ENCODE measurements at regions of chr10 and their contacts with region 1.

Region 1: GRCh38 chr10:62050893-62051433 is 149.5 kb downstream of the ARID5B start:
- DNase-seq: peak; percentile 72
- H3K4me3 Mint-ChIP-seq: peak overlapping the region; percentile 97
- H3K27ac Mint-ChIP-seq: peak overlapping the region; percentile 99
- H3K4me1 Mint-ChIP-seq: peaks cover 86% of the 10 kb centered on the region
- H3K27me3 Mint-ChIP-seq: no peaks in the 10 kb centered on the region

Region 2: DNA sequence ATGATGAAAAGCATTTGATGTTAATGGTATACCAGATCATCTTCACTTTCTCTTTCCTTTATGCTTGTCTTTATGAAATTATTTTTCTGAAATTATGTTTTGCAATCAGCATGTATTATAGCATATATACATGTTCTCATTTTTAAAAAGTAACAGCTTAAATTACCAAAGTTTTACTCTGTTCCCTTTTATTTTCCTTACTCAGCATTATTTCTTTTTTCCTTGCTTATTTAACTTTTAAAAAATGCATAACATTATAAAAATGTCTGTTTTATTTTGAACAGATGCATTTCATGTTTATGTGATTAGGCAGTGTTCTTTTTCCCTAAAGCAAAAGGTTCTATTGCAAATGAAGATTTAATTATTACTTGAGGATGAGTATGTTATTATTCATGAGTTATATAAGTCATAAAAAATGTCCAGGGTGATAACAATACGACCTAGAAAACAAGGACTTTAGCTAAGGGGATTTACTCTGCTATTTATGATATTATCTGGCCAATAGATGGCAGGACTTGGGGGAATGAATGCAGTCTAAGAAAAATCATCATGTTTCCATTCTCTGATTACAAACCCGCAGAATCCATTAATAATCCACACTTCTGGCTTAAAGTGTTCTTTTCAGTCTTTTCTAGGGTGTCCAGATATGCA is 349.8 kb before region 1 on chr10:
- intact Hi-C with region 1: no loop called
- DNase-seq: no peak
- H3K4me3 Mint-ChIP-seq: no peak overlapping the region
- H3K27ac Mint-ChIP-seq: no peak overlapping the region
- H3K4me1 Mint-ChIP-seq: no peaks in the 10 kb centered on the region
- H3K27me3 Mint-ChIP-seq: peaks cover 9% of the 10 kb centered on the region

Region 3: GRCh38 chr10:61760943-61761824 is 289.8 kb before region 1 on chr10:
- intact Hi-C with region 1: loop called (anchors 5 kb)
- DNase-seq: no peak
- H3K4me3 Mint-ChIP-seq: peak overlapping the region; percentile 30
- H3K27ac Mint-ChIP-seq: peak overlapping the region; percentile 87
- H3K4me1 Mint-ChIP-seq: peaks cover 65% of the 10 kb centered on the region
- H3K27me3 Mint-ChIP-seq: no peaks in the 10 kb centered on the region

Region 4: GRCh38 chr10:61943674-61944410 is 107.1 kb before region 1 on chr10:
- intact Hi-C with region 1: loop called (anchors 1 kb)
- DNase-seq: no peak
- H3K4me3 Mint-ChIP-seq: peak overlapping the region; percentile 47
- H3K27ac Mint-ChIP-seq: peak overlapping the region; percentile 93
- H3K4me1 Mint-ChIP-seq: peaks cover 47% of the 10 kb centered on the region
- H3K27me3 Mint-ChIP-seq: no peaks in the 10 kb centered on the region

Region 5: DNA sequence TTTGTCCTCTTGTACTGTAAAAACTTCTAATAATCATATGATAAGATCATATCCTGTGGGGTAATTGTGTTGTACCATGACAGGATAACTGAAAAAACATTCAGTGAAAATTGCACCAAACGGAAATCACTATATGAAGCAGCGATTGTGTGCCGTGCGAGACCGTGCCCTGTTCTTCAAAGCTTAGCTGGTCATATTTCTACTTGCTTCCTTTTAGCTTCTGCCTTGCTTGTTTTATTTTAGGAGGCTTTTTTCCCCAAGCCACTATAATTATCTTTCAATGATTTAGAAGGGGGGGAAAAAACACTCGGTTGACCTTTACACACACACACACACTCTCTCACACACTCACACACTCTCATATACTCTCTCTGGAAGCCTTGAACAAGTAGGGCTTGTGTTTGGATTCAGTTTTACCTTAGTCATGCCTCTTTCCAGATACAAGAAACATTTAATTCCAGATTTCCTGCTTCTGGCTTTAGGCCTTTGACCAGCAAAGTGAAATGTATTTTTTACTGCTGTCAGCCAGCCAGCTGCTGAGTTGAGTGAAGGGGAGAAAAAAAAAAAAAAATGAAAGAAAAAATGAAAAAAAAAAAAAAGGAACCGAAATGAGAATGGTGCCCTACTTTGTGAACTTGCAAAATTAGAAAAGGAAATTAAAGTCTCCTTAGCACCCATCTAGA is 31.9 kb after region 1 on chr10:
- intact Hi-C with region 1: loop called (anchors 2 kb)
- DNase-seq: peak; percentile 44
- H3K4me3 Mint-ChIP-seq: peak overlapping the region; percentile 61
- H3K27ac Mint-ChIP-seq: peak overlapping the region; percentile 87
- H3K4me1 Mint-ChIP-seq: peaks cover 62% of the 10 kb centered on the region
- H3K27me3 Mint-ChIP-seq: no peaks in the 10 kb centered on the region

Region 6: GRCh38 chr10:62113680-62114079 is 62.7 kb after region 1 on chr10:
- intact Hi-C with region 1: no loop called
- DNase-seq: no peak
- H3K4me3 Mint-ChIP-seq: no peak overlapping the region
- H3K27ac Mint-ChIP-seq: no peak overlapping the region
- H3K4me1 Mint-ChIP-seq: peaks cover 32% of the 10 kb centered on the region
- H3K27me3 Mint-ChIP-seq: no peaks in the 10 kb centered on the region

Region 7: DNA sequence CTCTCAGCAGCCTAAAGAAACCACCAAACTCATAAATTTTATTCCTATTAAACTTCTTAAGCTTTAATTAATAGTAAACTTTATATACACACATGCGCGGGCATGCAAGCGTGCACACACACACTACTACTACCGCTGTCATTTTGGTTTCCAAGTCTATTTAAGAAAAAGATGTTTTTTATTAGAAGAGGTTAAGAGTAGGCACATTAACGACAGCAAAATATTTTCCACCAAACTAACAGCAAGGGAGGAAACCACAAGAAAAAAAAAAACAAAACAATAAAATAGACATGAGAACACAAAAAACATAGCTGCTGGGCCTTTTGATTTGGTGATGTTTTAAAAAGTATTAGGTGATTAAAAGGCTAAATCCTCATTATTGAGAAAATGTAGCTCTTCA is 189.0 kb after region 1 on chr10:
- intact Hi-C with region 1: no loop called
- DNase-seq: no peak
- H3K4me3 Mint-ChIP-seq: no peak overlapping the region
- H3K27ac Mint-ChIP-seq: no peak overlapping the region
- H3K4me1 Mint-ChIP-seq: peaks cover 37% of the 10 kb centered on the region
- H3K27me3 Mint-ChIP-seq: no peaks in the 10 kb centered on the region

Region 8: DNA sequence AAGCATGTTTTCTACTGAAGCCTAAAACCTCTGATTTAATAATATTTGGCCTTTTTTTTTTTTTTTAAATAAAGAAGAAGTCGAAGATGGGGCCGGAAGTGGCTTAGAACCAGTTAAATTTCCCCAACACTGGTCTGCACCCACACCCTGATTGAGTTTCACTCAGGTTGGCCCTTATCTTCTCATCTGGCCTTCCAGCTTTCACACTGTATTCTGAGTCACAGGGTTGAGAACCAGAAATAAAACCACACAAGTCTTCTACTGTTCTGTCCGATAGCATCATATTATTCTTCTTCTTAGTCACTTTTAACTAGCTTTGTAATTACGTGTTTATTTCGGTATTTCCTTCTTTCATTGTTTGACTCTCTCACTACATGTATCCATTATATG is 333.1 kb after region 1 on chr10:
- intact Hi-C with region 1: loop called (anchors 5 kb)
- DNase-seq: peak; percentile 55
- H3K4me3 Mint-ChIP-seq: no peak overlapping the region
- H3K27ac Mint-ChIP-seq: peak overlapping the region; percentile 60
- H3K4me1 Mint-ChIP-seq: peaks cover 27% of the 10 kb centered on the region
- H3K27me3 Mint-ChIP-seq: peaks cover 54% of the 10 kb centered on the region

Region 9: GRCh38 chr10:62811159-62811875 is 760.4 kb after region 1 on chr10:
- intact Hi-C with region 1: loop called (anchors 1 kb)
- DNase-seq: peak; percentile 58
- H3K4me3 Mint-ChIP-seq: peak overlapping the region; percentile 97
- H3K27ac Mint-ChIP-seq: peak overlapping the region; percentile 83
- H3K4me1 Mint-ChIP-seq: peaks cover 67% of the 10 kb centered on the region
- H3K27me3 Mint-ChIP-seq: peaks cover 2% of the 10 kb centered on the region

Region 10: GRCh38 chr10:63133056-63133820 is 1082.3 kb after region 1 on chr10 and contains the start of gene NRBF2:
- intact Hi-C with region 1: loop called (anchors 10 kb)
- DNase-seq: peak; percentile 96
- H3K4me3 Mint-ChIP-seq: peak within 1 kb of the TSS; percentile 94
- H3K27ac Mint-ChIP-seq: peak within 1 kb of the TSS; percentile 95
- H3K4me1 Mint-ChIP-seq: peaks cover 19% of the 10 kb centered on the region
- H3K27me3 Mint-ChIP-seq: peaks cover 3% of the 10 kb centered on the region
- total RNA-seq, gene NRBF2: 32.2 and 32.7 TPM in 2 replicates

Measured in activated T-helper 2 cell treated with anti-CD3 and anti-CD28 coated beads, Interferon-gamma antibody, Interleukin-2, Interleukin-4, amounts not matched to agents 10 μg/mL and 5 μg/mL and 100 μg/mL, durations not matched to agents 14 hours and 24 hours and 36 hours (primary cell).